ENCODE measurements at regions of chr4 and their contacts with region 1.

Region 1: DNA sequence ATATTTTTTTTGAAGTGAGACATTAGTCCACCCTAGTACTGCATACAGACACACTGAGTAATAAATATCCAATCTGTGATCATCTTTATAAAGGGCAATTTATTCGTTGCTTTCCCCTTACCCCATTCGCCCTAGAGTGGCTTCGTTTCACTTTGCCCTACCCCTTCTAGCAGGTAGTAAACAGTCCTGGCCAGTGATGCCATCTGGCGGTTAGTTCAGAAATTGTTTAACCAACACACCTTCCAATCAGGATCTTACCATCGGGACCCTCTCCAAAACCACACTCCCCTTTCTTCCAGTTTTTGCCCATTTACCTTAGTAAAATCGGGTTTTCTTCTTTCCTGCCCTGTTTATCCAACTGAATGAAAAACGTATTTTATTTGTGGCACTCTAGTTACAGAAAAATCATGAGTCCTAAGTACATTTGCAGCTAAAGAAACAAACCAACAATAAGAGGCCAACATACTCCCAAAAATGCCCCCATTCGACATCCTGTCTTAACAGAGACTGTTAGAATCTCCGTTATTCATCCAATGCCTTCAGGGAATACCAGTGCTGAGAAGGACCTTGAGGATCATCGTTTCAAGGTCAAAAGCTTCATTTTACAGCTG is 2.2 kb downstream of the PPA2 start:
- DNase-seq: peak; percentile 78
- H3K4me3 ChIP-seq: peak overlapping the region in 4 of 8 donors; percentile 3 to 93 (median 84)
- H3K27ac ChIP-seq: peak overlapping the region in 6 of 8 donors; percentile 3 to 99 (median 80)
- H3K4me1 ChIP-seq: peaks cover 9 to 64% (median 45%) of the 10 kb centered on the region in 6 donors
- H3K27me3 ChIP-seq: no peaks in the 10 kb centered on the region
- CTCF ChIP-seq: peak; percentile 47 to 84 (median 72)
- POLR2A ChIP-seq: no peak

Region 2: DNA sequence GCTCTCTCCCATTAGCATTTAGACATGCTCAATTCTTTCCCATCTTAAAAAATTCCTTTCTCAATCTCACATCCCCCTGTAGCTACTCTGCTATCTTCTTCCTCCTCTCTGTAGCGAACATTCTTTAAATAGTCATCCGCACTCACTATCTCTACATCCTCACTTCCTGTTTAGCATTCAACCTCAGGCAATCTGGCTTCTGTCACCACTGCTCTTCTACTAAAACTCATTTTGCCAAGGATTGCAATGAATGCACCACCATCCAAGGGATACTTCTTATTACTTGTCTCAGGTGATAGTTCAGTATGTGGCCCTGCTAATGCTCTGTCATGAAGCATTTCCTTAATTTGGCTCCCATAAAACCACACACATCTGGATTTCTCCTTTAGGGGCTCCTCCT is 335.9 kb before region 1 on chr4:
- intact Hi-C with region 1: loop called (anchors 5 kb)
- DNase-seq: no peak
- H3K4me3 ChIP-seq: no peak overlapping the region
- H3K27ac ChIP-seq: peak overlapping the region in 1 of 8 donors; percentile 17
- H3K4me1 ChIP-seq: peaks cover 0 to 22% (median 0%) of the 10 kb centered on the region in 6 donors
- H3K27me3 ChIP-seq: no peaks in the 10 kb centered on the region
- CTCF ChIP-seq: no peak
- POLR2A ChIP-seq: no peak